Heart right ventricle (tissue), 16 donors: ENCODE measurements at regions of chr4 and their contacts with region 1.

Region 1: GRCh38 chr4:68498413-68499007 is 51.2 kb downstream of the TMPRSS11E start:
- DNase-seq: peak in 1 of 2 donors; percentile 25
- ATAC-seq: no peak
- H3K4me3 ChIP-seq: no peak overlapping the region
- H3K27ac ChIP-seq: no peak overlapping the region
- H3K4me1 ChIP-seq: peaks cover 0 to 7% (median 0%) of the 10 kb centered on the region in 9 donors
- H3K27me3 ChIP-seq: no peaks in the 10 kb centered on the region
- CTCF ChIP-seq: peak; percentile 55 to 90 (median 80)

Region 2: GRCh38 chr4:68368691-68369480 is 129.6 kb before region 1 on chr4:
- intact Hi-C with region 1: no loop called
- DNase-seq: no peak
- ATAC-seq: no peak
- H3K4me3 ChIP-seq: no peak overlapping the region
- H3K27ac ChIP-seq: no peak overlapping the region
- H3K4me1 ChIP-seq: peaks cover 0 to 5% (median 0%) of the 10 kb centered on the region in 9 donors
- H3K27me3 ChIP-seq: peaks cover 0 to 13% (median 0%) of the 10 kb centered on the region in 7 donors
- CTCF ChIP-seq: no peak

Region 3: DNA sequence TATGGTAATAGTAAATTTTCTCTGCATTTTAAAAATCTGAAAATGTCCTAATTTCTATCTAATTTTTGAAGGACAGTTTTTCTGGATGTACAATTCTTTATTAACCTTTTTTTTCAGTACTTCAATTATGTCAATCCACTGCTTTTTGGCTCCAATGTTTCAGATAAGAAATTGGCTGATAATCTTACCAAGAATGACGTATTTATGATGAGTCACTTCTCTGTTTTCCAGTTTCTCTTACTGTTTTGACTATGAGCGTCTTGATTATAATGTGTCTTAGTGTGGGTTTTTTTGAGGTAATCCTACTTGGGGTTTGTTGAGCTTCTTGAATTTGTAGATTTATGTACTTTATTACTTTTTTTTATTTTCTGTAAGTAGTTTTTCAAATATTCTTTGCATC is 668.8 kb after region 1 on chr4:
- intact Hi-C with region 1: loop called in 6 of 10 experiments (anchors 2 to 10 kb)
- DNase-seq: no peak
- ATAC-seq: no peak
- H3K4me3 ChIP-seq: no peak overlapping the region
- H3K27ac ChIP-seq: no peak overlapping the region
- H3K4me1 ChIP-seq: no peaks in the 10 kb centered on the region
- H3K27me3 ChIP-seq: no peaks in the 10 kb centered on the region
- CTCF ChIP-seq: no peak